SK-N-SH (cell line): ENCODE measurements at regions of chr7 and their contacts with region 1.

Region 1: GRCh38 chr7:88111136-88111743 is 108.6 kb downstream of the SRI start:
- DNase-seq: peak; percentile 36
- H3K4me3 ChIP-seq: no peak overlapping the region
- H3K27ac ChIP-seq: no peak overlapping the region
- H3K4me1 ChIP-seq: peaks cover 0 to 9% of the 10 kb centered on the region in 2 experiments; a peak in 2 of 4 replicates
- H3K27me3 ChIP-seq: no peaks in the 10 kb centered on the region
- CTCF ChIP-seq: peak; percentile 92
- EP300 ChIP-seq: no peak
- RAD21 ChIP-seq: peak; percentile 98

Region 2: DNA sequence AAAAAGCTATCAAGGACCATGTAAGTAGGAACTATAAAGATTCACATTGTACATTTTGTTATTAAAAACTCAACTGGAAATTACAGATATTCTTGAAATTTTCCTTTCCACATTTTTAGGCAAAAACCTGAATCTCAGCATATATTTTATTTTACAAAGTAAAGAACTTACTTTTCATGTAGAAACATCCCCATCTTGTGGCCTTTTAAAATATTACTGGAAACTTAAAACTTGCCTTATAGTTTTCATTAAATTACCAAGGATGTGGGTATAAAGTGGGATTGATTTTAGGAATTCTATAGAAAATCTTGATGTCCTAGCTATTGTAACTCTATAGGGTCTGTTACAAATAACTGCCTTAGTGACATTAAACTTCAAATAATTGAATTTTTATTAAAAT is 224.4 kb before region 1 on chr7:
- CTCF ChIA-PET with region 1: interaction called, 13 read pairs
- POLR2A ChIA-PET with region 1: no interaction called
- DNase-seq: peak; percentile 17
- H3K4me3 ChIP-seq: no peak overlapping the region; a peak in 1 of 4 replicates
- H3K27ac ChIP-seq: no peak overlapping the region; a peak in 1 of 4 replicates
- H3K4me1 ChIP-seq: peaks cover 0 to 5% of the 10 kb centered on the region in 2 experiments; a peak in 2 of 4 replicates
- H3K27me3 ChIP-seq: no peaks in the 10 kb centered on the region
- CTCF ChIP-seq: peak; percentile 80
- EP300 ChIP-seq: no peak
- RAD21 ChIP-seq: peak; percentile 75

Region 3: GRCh38 chr7:87933945-87934698 is 177.1 kb before region 1 on chr7 and contains the start of gene ADAM22:
- CTCF ChIA-PET with region 1: interaction called, 23 read pairs
- POLR2A ChIA-PET with region 1: interaction called, 8 read pairs
- DNase-seq: peak; percentile 98
- H3K4me3 ChIP-seq: peak within 1 kb of the TSS; percentile 74 to 75
- H3K27ac ChIP-seq: peak within 1 kb of the TSS in 1 of 2 experiments; percentile 91; a peak in 2 of 4 replicates
- H3K4me1 ChIP-seq: peaks cover 0 to 11% of the 10 kb centered on the region in 2 experiments; a peak in 2 of 4 replicates
- H3K27me3 ChIP-seq: no peaks in the 10 kb centered on the region
- CTCF ChIP-seq: 0 out of 2 replicates have a peak, but pooled peaks have one; percentile 25
- EP300 ChIP-seq: peak; percentile 22 to 60; a peak in 2 of 4 replicates
- RAD21 ChIP-seq: peak; percentile 62
- polyA plus RNA-seq, gene ADAM22: 3.0 and 4.8 TPM in 2 replicates

Region 4: GRCh38 chr7:88127637-88128290 is 16.5 kb after region 1 on chr7:
- CTCF ChIA-PET with region 1: interaction called, 11 read pairs
- POLR2A ChIA-PET with region 1: interaction called, 3 read pairs
- DNase-seq: no peak
- H3K4me3 ChIP-seq: no peak overlapping the region
- H3K27ac ChIP-seq: no peak overlapping the region
- H3K4me1 ChIP-seq: no peaks in the 10 kb centered on the region; a peak in 1 of 4 replicates
- H3K27me3 ChIP-seq: no peaks in the 10 kb centered on the region
- CTCF ChIP-seq: no peak
- EP300 ChIP-seq: no peak
- RAD21 ChIP-seq: no peak

Region 5: DNA sequence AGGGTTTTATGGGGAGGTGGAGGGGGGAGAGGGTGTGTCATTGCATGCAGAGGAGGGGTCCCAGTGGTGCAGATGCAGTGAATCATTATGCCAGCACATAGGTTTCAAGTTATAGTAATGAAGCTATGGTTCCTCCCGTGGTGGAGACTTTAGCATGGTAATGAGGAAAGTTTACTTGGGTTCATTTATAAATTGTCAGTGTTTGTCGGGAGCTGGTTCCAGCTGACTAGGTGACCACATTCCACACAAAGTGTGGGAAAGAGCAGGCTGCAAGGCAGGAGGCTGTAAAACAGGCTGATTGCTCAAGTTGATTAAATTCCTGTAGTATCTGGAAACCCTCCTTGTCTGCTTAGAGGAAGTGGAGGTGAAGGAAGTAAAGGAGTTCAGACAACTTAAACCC is 29.7 kb after region 1 on chr7:
- CTCF ChIA-PET with region 1: interaction called, 10 read pairs
- POLR2A ChIA-PET with region 1: no interaction called
- DNase-seq: no peak
- H3K4me3 ChIP-seq: no peak overlapping the region
- H3K27ac ChIP-seq: no peak overlapping the region
- H3K4me1 ChIP-seq: peaks cover 0 to 7% of the 10 kb centered on the region in 2 experiments; a peak in 2 of 4 replicates
- H3K27me3 ChIP-seq: no peaks in the 10 kb centered on the region
- CTCF ChIP-seq: no peak
- EP300 ChIP-seq: no peak; a peak in 1 of 4 replicates
- RAD21 ChIP-seq: no peak

Region 6: GRCh38 chr7:88156356-88156755 is 45.1 kb after region 1 on chr7:
- CTCF ChIA-PET with region 1: no interaction called
- POLR2A ChIA-PET with region 1: no interaction called
- DNase-seq: no peak
- H3K4me3 ChIP-seq: no peak overlapping the region
- H3K27ac ChIP-seq: no peak overlapping the region
- H3K4me1 ChIP-seq: peaks cover 0 to 1% of the 10 kb centered on the region in 2 experiments; a peak in 1 of 4 replicates
- H3K27me3 ChIP-seq: no peaks in the 10 kb centered on the region
- CTCF ChIP-seq: no peak
- EP300 ChIP-seq: no peak
- RAD21 ChIP-seq: no peak

Region 7: GRCh38 chr7:88169717-88170320 is 58.6 kb after region 1 on chr7:
- CTCF ChIA-PET with region 1: interaction called, 13 read pairs
- POLR2A ChIA-PET with region 1: no interaction called
- DNase-seq: peak; percentile 15
- H3K4me3 ChIP-seq: no peak overlapping the region
- H3K27ac ChIP-seq: no peak overlapping the region
- H3K4me1 ChIP-seq: peaks cover 0 to 8% of the 10 kb centered on the region in 2 experiments; a peak in 2 of 4 replicates
- H3K27me3 ChIP-seq: no peaks in the 10 kb centered on the region
- CTCF ChIP-seq: peak; percentile 82
- EP300 ChIP-seq: no peak
- RAD21 ChIP-seq: peak; percentile 77

Region 8: GRCh38 chr7:88610942-88611341 is 499.7 kb after region 1 on chr7:
- CTCF ChIA-PET with region 1: no interaction called
- POLR2A ChIA-PET with region 1: no interaction called
- DNase-seq: no peak
- H3K4me3 ChIP-seq: no peak overlapping the region
- H3K27ac ChIP-seq: no peak overlapping the region
- H3K4me1 ChIP-seq: no peaks in the 10 kb centered on the region
- H3K27me3 ChIP-seq: no peaks in the 10 kb centered on the region
- CTCF ChIP-seq: no peak
- EP300 ChIP-seq: no peak
- RAD21 ChIP-seq: no peak